Sigmoid colon (tissue), 7 donors: ENCODE measurements at regions of chr5 and their contacts with region 1.

Region 1: GRCh38 chr5:68159224-68159951 is 56.2 kb upstream of the PIK3R1 start:
- DNase-seq: peak; percentile 72
- H3K4me3 ChIP-seq: no peak overlapping the region
- H3K27ac ChIP-seq: no peak overlapping the region
- H3K4me1 ChIP-seq: no peaks in the 10 kb centered on the region
- H3K27me3 ChIP-seq: no peaks in the 10 kb centered on the region
- CTCF ChIP-seq: no peak
- EP300 ChIP-seq: no peak
- POLR2A ChIP-seq: no peak

Region 2: DNA sequence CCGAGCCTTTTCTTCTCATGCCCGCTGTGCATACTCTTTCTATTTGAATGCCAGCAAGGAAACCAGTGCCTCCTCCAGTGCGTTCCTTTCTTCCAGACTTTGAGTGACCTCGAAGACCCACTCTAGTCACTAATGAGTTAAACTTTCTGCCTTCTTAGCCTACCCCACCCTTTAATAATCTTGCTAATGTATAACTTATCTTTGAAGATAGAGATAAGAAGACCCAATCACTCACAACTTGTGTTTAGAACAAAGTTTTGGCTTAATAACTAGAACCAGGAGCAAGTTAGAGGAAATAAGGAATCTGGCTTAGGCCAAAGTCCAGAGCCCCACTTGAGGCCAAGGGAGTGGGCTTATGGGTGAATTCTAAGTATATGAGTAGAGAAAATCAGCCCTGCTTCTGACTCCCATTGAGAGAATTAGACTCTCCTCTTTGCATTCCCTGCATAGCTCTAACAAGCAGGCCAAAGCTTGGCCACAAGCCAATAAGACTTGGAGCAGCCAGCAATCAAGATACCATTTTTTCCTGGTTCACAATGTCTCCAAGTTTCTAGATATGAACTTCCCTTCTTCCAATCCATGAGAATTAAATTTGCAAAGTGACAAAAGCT is 125.3 kb before region 1 on chr5:
- intact Hi-C with region 1: loop called (anchors 10 kb)
- DNase-seq: no peak
- H3K4me3 ChIP-seq: no peak overlapping the region
- H3K27ac ChIP-seq: no peak overlapping the region
- H3K4me1 ChIP-seq: peaks cover 0 to 26% (median 17%) of the 10 kb centered on the region in 4 donors
- H3K27me3 ChIP-seq: no peaks in the 10 kb centered on the region
- CTCF ChIP-seq: no peak
- EP300 ChIP-seq: no peak
- POLR2A ChIP-seq: no peak

Region 3: GRCh38 chr5:68287976-68288706 is 128.8 kb after region 1 on chr5:
- intact Hi-C with region 1: no loop called
- DNase-seq: peak; percentile 81
- H3K4me3 ChIP-seq: peak overlapping the region; percentile 29 to 58 (median 50)
- H3K27ac ChIP-seq: peak overlapping the region; percentile 78 to 94 (median 84)
- H3K4me1 ChIP-seq: peaks cover 0 to 96% (median 92%) of the 10 kb centered on the region in 4 donors
- H3K27me3 ChIP-seq: no peaks in the 10 kb centered on the region
- CTCF ChIP-seq: no peak
- EP300 ChIP-seq: no peak
- POLR2A ChIP-seq: no peak